Lower leg skin (tissue), 4 donors: ENCODE measurements at regions of chr7 and their contacts with region 1.

Region 1: DNA sequence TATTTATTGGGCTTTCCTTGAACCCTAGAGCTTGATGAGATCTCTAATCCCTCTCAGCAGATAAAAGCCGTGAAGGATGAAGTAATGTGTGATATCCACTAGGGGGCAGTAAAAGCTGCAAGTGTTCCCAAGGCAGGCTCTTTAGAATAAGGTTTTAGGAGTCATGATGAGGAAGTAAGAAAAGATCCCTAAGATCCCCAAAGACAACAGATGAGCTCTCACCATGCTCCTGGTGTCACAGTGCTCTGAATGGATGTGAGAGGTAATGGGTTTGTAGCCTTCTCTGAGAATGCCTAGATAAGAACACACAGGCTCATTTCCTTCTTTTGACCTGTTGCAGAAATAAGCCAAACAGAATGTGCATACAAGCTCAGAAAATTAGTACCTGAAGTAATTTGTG is 70.4 kb upstream of the ITPRID1 start:
- DNase-seq: no peak
- H3K4me3 ChIP-seq: no peak overlapping the region
- CTCF ChIP-seq: no peak
- POLR2A ChIP-seq: no peak

Region 2: DNA sequence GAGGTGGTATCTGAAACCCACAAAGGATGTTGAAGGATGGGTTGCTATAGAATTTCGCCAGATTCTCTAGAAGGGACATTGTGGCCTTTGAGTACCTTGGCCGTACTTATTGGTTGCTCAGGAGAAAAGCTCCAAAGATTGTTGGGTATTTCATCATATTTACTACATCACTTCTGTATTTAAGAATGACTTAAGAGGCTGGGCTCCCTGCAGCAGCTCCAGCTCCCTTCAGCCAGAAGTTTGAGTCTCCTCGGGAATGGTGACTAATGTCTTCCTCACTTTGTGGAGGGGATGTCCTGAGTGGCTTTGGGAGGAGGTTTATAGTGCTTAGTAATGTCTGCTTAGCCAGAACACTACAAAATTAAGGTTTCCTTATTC is 654.1 kb before region 1 on chr7:
- intact Hi-C with region 1: no loop called
- DNase-seq: peak in 1 of 2 donors; percentile 79
- H3K4me3 ChIP-seq: no peak overlapping the region
- CTCF ChIP-seq: no peak
- POLR2A ChIP-seq: no peak

Region 3: GRCh38 chr7:31633894-31634494 is 190.5 kb after region 1 on chr7:
- intact Hi-C with region 1: loop called (anchors 10 kb)
- DNase-seq: no peak
- H3K4me3 ChIP-seq: no peak overlapping the region
- CTCF ChIP-seq: no peak
- POLR2A ChIP-seq: no peak

Region 4: GRCh38 chr7:31735991-31736982 is 292.8 kb after region 1 on chr7:
- intact Hi-C with region 1: loop called (anchors 5 kb)
- DNase-seq: peak in 1 of 2 donors; percentile 35
- H3K4me3 ChIP-seq: no peak overlapping the region
- CTCF ChIP-seq: no peak
- POLR2A ChIP-seq: no peak